ENCODE measurements at regions of chr14 and their contacts with region 1.

Region 1: DNA sequence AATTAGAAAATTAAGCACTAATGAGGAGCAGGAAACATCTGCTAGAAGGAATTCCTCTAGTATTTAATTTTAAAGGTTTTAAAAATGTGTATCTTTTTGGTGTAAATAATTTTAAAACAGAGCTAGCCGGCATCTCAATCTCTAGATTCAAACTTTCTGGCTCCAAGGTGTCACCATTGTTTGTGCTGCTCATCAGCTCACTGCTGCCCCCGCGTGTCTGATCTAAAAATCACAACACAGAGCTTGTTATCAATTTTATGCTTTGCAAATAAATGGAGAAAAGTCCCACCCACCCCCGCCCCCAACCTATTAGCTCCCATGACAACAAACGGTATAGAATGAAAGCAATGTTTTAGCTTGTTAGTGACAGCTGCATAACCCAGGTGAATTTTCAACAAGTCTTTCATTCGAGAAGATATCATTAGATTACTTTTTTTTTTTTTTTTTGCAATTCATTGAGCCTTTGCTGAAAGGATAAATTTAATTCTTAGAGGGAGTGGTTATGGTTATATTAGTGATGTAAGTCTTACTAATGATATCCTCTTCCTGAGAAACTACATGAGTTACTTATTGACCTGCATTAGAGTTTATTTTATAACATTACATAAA is 11.3 kb upstream of the ABHD12B start:
- DNase-seq: peak; percentile 81
- ATAC-seq: peak; percentile 71
- H3K4me3 ChIP-seq: no peak overlapping the region; the same call in 1 of the 2 replicates
- H3K27ac ChIP-seq: no peak overlapping the region
- H3K4me1 ChIP-seq: peaks cover 14% of the 10 kb centered on the region
- H3K27me3 ChIP-seq: no peaks in the 10 kb centered on the region
- CTCF ChIP-seq: peak; percentile 75
- POLR2A ChIP-seq: no peak
- RAD21 ChIP-seq: peak; percentile 80

Region 2: GRCh38 chr14:50599700-50600444 is 260.7 kb before region 1 on chr14:
- CTCF ChIA-PET with region 1: interaction called, 5 read pairs
- POLR2A ChIA-PET with region 1: interaction called, 3 read pairs
- dilution Hi-C with region 1: no loop called
- in situ Hi-C with region 1: no loop called
- intact Hi-C with region 1: loop called (anchors 2 kb)
- DNase-seq: peak; percentile 60
- ATAC-seq: peak; percentile 65; the same call in 1 of the 2 replicates
- H3K4me3 ChIP-seq: no peak overlapping the region
- H3K27ac ChIP-seq: no peak overlapping the region
- H3K4me1 ChIP-seq: peaks cover 1% of the 10 kb centered on the region; the same call in 1 of the 2 replicates
- H3K27me3 ChIP-seq: no peaks in the 10 kb centered on the region
- CTCF ChIP-seq: peak; percentile 66
- POLR2A ChIP-seq: no peak
- RAD21 ChIP-seq: peak; percentile 67

Region 3: GRCh38 chr14:50773632-50774541 is 86.7 kb before region 1 on chr14:
- CTCF ChIA-PET with region 1: interaction called, 31 read pairs
- POLR2A ChIA-PET with region 1: interaction called, 5 read pairs
- dilution Hi-C with region 1: no loop called
- in situ Hi-C with region 1: no loop called
- intact Hi-C with region 1: loop called (anchors 1 kb)
- DNase-seq: peak; percentile 50
- ATAC-seq: peak; percentile 69
- H3K4me3 ChIP-seq: no peak overlapping the region
- H3K27ac ChIP-seq: no peak overlapping the region
- H3K4me1 ChIP-seq: peaks cover 16% of the 10 kb centered on the region
- H3K27me3 ChIP-seq: no peaks in the 10 kb centered on the region
- CTCF ChIP-seq: peak; percentile 85
- POLR2A ChIP-seq: no peak
- RAD21 ChIP-seq: peak; percentile 83

Region 4: GRCh38 chr14:50798048-50798421 is 62.5 kb before region 1 on chr14:
- CTCF ChIA-PET with region 1: interaction called, 5 read pairs
- POLR2A ChIA-PET with region 1: no interaction called
- dilution Hi-C with region 1: no loop called
- in situ Hi-C with region 1: loop called (anchors 5 kb)
- intact Hi-C with region 1: no loop called
- DNase-seq: no peak
- ATAC-seq: no peak
- H3K4me3 ChIP-seq: no peak overlapping the region
- H3K27ac ChIP-seq: no peak overlapping the region
- H3K4me1 ChIP-seq: peaks cover 23% of the 10 kb centered on the region
- H3K27me3 ChIP-seq: no peaks in the 10 kb centered on the region
- CTCF ChIP-seq: no peak
- POLR2A ChIP-seq: no peak
- RAD21 ChIP-seq: no peak

Region 5: DNA sequence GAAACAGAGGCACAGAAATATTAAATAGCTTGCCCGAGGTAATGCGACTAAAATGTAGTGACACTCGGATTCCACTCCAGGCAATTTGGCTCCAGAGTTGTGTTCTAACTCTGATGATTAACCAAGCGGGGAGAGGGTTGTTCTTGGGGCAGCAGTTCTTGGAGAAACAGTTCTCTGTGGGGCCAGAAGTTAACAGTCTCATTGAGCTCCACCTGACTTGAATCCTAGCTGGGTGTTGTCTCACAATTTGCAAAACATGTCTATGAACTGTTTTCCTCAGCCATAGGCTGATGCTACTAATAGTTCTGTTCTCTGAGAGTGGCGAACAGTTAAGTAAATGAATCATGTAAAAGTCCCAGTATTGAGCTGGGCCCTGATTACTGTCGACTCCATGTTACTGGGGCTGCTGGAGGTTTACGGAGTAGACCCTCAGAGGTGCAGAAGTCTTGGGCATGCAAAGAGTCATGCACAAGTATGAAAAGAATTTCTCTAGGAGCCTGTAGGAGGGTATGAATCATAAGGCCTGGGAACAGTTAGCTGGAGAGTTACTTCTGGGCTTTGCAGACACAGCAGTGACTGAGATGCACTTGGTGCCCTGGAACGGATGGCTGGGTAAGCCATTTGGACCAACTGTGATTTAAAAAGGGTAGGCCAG is 14.2 kb before region 1 on chr14:
- CTCF ChIA-PET with region 1: interaction called, 10 read pairs
- POLR2A ChIA-PET with region 1: no interaction called
- dilution Hi-C with region 1: no loop called
- in situ Hi-C with region 1: no loop called
- intact Hi-C with region 1: no loop called
- DNase-seq: peak; percentile 92
- ATAC-seq: peak; percentile 99
- H3K4me3 ChIP-seq: no peak overlapping the region
- H3K27ac ChIP-seq: no peak overlapping the region
- H3K4me1 ChIP-seq: peaks cover 11% of the 10 kb centered on the region
- H3K27me3 ChIP-seq: no peaks in the 10 kb centered on the region
- CTCF ChIP-seq: no peak
- POLR2A ChIP-seq: no peak
- RAD21 ChIP-seq: no peak; the same call in 1 of the 2 replicates